ENCODE measurements at regions of chr12 and their contacts with region 1.

Region 1: DNA sequence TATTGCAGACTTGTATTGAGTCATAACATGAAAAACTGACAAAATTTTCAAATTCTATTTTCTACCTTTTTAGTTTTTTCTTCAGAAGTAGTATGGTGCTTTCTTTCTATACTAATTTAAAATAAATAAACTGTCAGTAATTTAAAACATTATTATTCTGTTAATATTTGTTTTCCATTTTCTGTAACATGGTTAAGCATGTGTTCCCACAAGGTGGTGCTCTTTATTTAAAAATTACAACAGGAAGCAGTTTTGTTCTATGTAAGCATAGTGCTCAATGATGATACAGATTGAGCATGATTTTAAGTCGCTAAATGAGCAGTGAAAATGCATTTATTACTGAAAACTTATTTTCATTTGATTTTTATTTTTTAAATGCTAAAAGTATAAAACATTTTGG is 114.6 kb downstream of the PPFIA2 start:
- DNase-seq: no peak
- H3K4me3 ChIP-seq: no peak overlapping the region
- H3K27ac ChIP-seq: no peak overlapping the region
- H3K4me1 ChIP-seq: no peaks in the 10 kb centered on the region
- H3K27me3 ChIP-seq: no peaks in the 10 kb centered on the region
- CTCF ChIP-seq: peak; percentile 40

Region 2: DNA sequence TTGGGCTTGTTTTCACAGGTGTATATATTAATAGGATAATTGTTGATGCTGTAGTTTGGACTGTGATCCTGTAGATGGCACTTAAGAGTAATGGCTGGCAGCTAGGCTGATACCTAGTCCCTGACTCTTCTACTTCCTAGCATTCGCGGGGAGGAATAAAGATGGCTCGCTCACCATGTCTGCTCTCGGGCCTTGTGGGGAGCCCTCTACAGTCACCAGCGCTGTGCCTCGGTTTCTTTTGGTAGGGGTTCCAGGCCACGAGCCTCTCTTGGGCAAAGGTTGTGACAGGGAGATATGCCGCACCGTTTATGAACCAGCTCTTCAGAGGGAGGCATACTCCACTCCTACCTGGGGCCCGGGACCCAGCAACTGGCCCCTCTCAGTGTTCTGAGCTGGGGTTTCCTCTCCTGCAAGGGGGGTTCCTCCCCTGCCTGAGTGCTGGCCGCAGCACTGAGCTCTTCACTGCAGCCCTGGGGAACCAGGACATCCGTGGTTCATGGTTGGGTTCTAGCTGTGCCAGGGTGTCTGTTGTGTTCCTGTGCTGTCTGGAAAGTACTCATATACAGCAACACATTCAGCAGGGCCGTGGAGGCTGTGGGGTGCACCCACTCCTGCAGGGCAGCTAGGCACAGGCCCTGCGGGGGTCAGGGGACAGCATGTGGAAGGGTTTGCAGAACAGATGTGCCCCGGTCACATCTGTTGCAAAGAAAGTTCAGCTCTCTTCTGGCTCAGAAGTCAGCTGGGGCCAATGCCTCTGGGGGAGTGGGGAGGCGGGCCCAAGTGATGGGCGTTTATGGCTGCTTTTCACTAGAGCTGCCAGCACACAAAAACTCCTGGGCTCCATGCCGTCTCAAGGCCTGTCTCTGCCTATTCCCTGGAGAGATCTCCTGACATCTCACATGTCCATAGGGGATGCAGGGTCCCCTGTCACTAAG is 33.3 kb before region 1 on chr12:
- intact Hi-C with region 1: no loop called
- DNase-seq: no peak
- H3K4me3 ChIP-seq: no peak overlapping the region
- H3K27ac ChIP-seq: no peak overlapping the region
- H3K4me1 ChIP-seq: no peaks in the 10 kb centered on the region
- H3K27me3 ChIP-seq: no peaks in the 10 kb centered on the region
- CTCF ChIP-seq: no peak

Region 3: GRCh38 chr12:82358200-82359114 is 714.0 kb after region 1 on chr12 and contains the starts of genes CCDC59 and METTL25:
- intact Hi-C with region 1: loop called (anchors 10 kb)
- DNase-seq: peak; percentile 99
- H3K4me3 ChIP-seq: peak within 1 kb of the TSS; percentile 77
- H3K27ac ChIP-seq: peak within 1 kb of the TSS; percentile 93
- H3K4me1 ChIP-seq: peaks cover 4% of the 10 kb centered on the region
- H3K27me3 ChIP-seq: no peaks in the 10 kb centered on the region
- CTCF ChIP-seq: peak; percentile 95
- total RNA-seq, gene CCDC59: 26.6 to 29.9 TPM
- total RNA-seq, gene METTL25: 12.8 to 13.8 TPM

Region 4: GRCh38 chr12:82448911-82449578 is 804.5 kb after region 1 on chr12:
- intact Hi-C with region 1: no loop called
- DNase-seq: no peak
- H3K4me3 ChIP-seq: no peak overlapping the region
- H3K27ac ChIP-seq: no peak overlapping the region
- H3K4me1 ChIP-seq: no peaks in the 10 kb centered on the region
- H3K27me3 ChIP-seq: no peaks in the 10 kb centered on the region
- CTCF ChIP-seq: no peak